Activated naive CD4-positive, alpha-beta T cell treated with anti-CD3 and anti-CD28 coated beads for 36 hours (primary cell): ENCODE measurements at regions of chr1 and their contacts with region 1.

Region 1: DNA sequence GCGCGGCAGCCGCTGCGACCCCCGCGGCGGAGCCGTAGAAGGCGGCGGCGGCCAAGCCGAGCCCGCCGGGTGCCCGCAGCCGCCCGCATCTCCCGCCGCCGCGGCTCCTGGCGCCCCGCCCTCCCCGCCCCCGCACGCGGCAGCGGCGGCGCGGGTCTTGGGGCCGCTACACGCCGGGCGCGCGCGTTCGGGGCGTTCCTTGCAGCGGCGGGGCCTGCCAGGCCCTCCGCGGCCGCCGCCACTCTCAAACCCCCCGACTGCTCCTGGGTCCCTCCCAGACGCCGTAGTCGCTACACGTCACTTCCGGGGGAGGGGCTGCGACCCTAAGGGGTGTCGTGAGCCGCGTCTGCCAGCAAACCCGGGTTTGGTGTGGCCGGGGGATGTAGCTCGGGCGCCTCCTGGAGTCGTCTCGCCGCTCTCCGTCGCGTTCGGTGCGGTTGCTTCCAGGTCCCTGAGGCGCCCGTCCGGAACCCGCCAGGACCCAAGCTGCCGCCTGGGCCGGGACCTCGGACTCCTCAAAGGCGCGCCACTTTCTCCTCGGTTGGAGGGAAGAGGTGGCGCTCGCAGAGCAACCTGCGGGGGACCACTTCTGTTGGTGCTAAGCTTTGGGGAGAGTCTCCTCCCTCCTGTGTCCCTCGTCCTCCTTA is at the start of gene ELK4:
- DNase-seq: peak; percentile 100
- H3K4me3 Mint-ChIP-seq: peak within 1 kb of the TSS; percentile 81
- H3K27ac Mint-ChIP-seq: peak within 1 kb of the TSS; percentile 92
- H3K4me1 Mint-ChIP-seq: peaks cover 37% of the 10 kb centered on the region
- H3K27me3 Mint-ChIP-seq: no peaks in the 10 kb centered on the region
- total RNA-seq, gene ELK4: 60.5 to 62.4 TPM

Region 2: DNA sequence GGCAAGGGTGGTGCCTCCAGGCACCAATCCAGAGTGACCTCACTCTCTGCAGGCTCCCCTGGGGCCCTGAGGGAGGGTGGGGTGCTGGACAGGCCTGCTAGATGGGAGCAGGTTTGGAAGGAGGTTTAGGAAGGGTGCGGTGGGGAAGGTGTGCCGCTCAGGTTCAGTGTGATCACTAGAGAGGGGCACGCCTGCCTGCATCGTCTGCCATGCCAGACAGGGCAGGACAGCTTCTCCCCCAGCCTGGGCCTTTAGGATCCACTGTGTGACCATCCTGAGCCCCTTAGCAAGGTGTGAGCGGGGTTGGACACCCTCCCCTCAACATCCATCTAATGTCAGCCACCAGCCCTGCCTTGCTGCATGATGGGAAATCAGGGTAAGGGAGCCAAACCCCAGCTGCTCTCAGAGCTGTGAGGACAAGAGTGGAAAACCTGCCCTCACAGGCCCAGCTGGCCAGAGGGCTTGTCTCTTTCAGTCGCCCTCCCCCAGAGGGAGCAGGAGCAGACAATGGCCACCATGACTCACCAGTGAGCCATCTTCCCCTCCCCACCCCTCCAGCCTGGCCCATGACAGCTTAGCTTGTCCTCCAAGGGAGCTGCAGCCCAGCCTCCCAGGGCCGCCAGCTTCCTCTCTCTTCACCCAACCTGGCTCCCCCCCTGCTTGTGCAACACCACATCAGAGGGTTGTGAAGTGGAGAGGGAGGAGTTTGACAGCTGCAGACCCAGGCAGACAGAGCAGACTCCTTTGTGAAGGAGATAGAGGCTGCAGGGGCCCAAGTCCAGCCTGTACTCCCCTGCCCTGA is 347.3 kb before region 1 on chr1:
- CTCF ChIA-PET with region 1: interaction called, 4 read pairs
- intact Hi-C with region 1: loop called (anchors 1 kb)
- DNase-seq: peak; percentile 97
- H3K4me3 Mint-ChIP-seq: peak overlapping the region; percentile 29
- H3K27ac Mint-ChIP-seq: peak overlapping the region; percentile 87
- H3K4me1 Mint-ChIP-seq: peaks cover 77% of the 10 kb centered on the region
- H3K27me3 Mint-ChIP-seq: no peaks in the 10 kb centered on the region

Region 3: GRCh38 chr1:205528887-205529825 is 102.7 kb before region 1 on chr1:
- CTCF ChIA-PET with region 1: interaction called, 16 read pairs
- intact Hi-C with region 1: loop called (anchors 1 kb)
- DNase-seq: peak; percentile 87
- H3K4me3 Mint-ChIP-seq: peak overlapping the region; percentile 36
- H3K27ac Mint-ChIP-seq: no peak overlapping the region
- H3K4me1 Mint-ChIP-seq: no peaks in the 10 kb centered on the region
- H3K27me3 Mint-ChIP-seq: no peaks in the 10 kb centered on the region

Region 4: GRCh38 chr1:205616563-205617293 is 15.1 kb before region 1 on chr1:
- CTCF ChIA-PET with region 1: interaction called, 4 read pairs
- intact Hi-C with region 1: loop called (anchors 1 kb)
- DNase-seq: no peak
- H3K4me3 Mint-ChIP-seq: no peak overlapping the region
- H3K27ac Mint-ChIP-seq: peak overlapping the region; percentile 74
- H3K4me1 Mint-ChIP-seq: peaks cover 40% of the 10 kb centered on the region
- H3K27me3 Mint-ChIP-seq: no peaks in the 10 kb centered on the region

Region 5: DNA sequence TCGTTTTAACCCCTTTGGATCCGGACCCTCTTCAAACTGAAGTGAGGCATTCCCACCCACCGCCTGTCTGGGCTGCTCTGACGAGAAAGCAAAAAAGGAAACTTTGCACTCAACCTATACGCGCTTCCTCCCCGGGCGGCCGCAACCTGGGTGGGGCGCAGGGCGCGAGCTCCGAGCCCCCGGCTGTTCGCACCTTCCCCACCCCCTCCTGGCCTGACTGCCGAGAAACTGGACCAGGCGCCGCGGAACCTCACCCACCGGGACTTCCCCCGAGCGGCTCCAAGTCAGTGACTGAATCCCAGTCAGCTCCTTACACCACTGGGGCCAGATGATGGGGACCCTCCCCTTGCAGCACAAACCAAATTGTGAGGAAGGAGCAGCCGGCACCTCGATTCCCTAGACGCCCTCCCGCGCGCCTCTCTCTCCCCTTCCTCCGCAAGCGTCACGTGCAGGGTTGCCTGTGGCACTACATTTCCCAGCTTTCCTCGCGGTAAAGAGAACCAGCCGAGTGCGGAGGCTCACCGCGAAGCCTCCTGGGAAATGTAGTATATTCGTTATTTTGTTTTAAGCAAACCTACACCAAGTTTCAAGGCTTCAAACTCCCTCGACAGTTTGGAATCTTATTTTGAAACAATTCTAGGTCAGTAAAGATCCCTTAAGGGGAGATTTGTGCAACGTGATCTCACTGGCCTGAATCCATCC is 143.3 kb after region 1 on chr1 and contains the start of gene RAB29:
- CTCF ChIA-PET with region 1: interaction called, 3 read pairs
- intact Hi-C with region 1: loop called (anchors 1 kb)
- DNase-seq: peak; percentile 93
- H3K4me3 Mint-ChIP-seq: peak within 1 kb of the TSS; percentile 83
- H3K27ac Mint-ChIP-seq: peak within 1 kb of the TSS; percentile 94
- H3K4me1 Mint-ChIP-seq: peaks cover 53% of the 10 kb centered on the region
- H3K27me3 Mint-ChIP-seq: no peaks in the 10 kb centered on the region
- total RNA-seq, gene RAB29: 25.0 TPM